Activated T-helper 2 cell treated with anti-CD3 and anti-CD28 coated beads, Interferon-gamma antibody, Interleukin-2, Interleukin-4, amounts not matched to agents 10 μg/mL and 5 μg/mL and 100 μg/mL, durations not matched to agents 14 hours and 24 hours and 36 hours (primary cell): ENCODE measurements at regions of chr17 and their contacts with region 1.

Region 1: GRCh38 chr17:39153599-39154051 is 2.2 kb upstream of the PLXDC1 start:
- DNase-seq: peak; percentile 84
- H3K4me3 Mint-ChIP-seq: peak overlapping the region; percentile 95
- H3K27ac Mint-ChIP-seq: peak overlapping the region; percentile 84
- H3K4me1 Mint-ChIP-seq: peaks cover 16% of the 10 kb centered on the region
- H3K27me3 Mint-ChIP-seq: peaks cover 26% of the 10 kb centered on the region

Region 2: GRCh38 chr17:38752119-38752929 is 401.3 kb before region 1 on chr17 and contains the start of gene PSMB3:
- intact Hi-C with region 1: loop called (anchors 5 kb)
- DNase-seq: peak; percentile 97
- H3K4me3 Mint-ChIP-seq: peak within 1 kb of the TSS; percentile 100
- H3K27ac Mint-ChIP-seq: peak within 1 kb of the TSS; percentile 99
- H3K4me1 Mint-ChIP-seq: peaks cover 31% of the 10 kb centered on the region
- H3K27me3 Mint-ChIP-seq: peaks cover 15% of the 10 kb centered on the region
- total RNA-seq, gene PSMB3: 337 and 342 TPM in 2 replicates

Region 3: GRCh38 chr17:38853292-38854219 is 300.1 kb before region 1 on chr17 and contains the start of gene RPL23:
- intact Hi-C with region 1: loop called (anchors 5 kb)
- DNase-seq: peak; percentile 90
- H3K4me3 Mint-ChIP-seq: peak within 1 kb of the TSS; percentile 98
- H3K27ac Mint-ChIP-seq: peak within 1 kb of the TSS; percentile 98
- H3K4me1 Mint-ChIP-seq: peaks cover 26% of the 10 kb centered on the region
- H3K27me3 Mint-ChIP-seq: no peaks in the 10 kb centered on the region
- total RNA-seq, gene RPL23: 1,775 and 1,796 TPM in 2 replicates

Region 4: DNA sequence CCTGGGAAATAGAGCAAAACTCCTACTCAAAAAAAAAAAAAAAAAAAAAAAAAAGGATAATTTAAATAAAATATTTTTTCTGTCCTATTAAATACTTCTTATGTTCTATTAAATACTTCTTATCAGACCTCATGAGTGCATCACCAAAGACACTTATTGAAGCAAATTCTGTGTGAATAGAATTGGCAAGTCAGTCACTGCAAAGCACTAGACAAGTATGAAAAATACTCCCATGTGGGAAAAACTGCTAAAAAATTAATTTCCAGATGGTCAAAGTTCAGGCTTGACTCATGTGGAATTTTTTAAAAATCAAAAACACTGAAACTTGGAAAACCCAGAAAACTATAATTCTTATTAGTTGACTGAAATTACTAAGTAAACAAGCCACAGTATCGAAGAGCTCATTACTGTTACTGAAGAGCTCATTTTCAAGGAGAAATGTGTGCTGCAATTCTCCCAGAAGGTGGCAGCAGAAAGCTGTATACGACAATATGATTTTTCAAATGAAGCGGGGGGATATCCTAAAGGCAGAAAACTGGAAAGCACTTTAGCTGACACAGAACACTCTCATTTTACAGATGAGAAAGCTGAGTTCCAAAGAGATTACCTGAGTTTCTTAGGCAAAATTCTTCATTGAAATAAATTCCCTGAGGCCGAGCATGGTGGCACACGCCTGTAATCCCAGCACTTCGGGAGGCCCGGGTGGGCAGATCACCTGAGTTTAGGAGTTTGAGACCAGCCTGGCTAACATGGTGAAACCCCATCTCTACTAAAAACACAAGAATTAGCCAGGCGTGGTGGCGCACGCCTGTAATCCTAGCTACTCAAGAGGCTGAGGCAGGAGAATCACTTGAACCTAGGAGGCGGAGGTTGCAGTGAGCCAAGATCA is 170.5 kb before region 1 on chr17:
- intact Hi-C with region 1: loop called (anchors 1 kb)
- DNase-seq: peak; percentile 19
- H3K4me3 Mint-ChIP-seq: no peak overlapping the region
- H3K27ac Mint-ChIP-seq: no peak overlapping the region
- H3K4me1 Mint-ChIP-seq: peaks cover 5% of the 10 kb centered on the region
- H3K27me3 Mint-ChIP-seq: peaks cover 13% of the 10 kb centered on the region

Region 5: DNA sequence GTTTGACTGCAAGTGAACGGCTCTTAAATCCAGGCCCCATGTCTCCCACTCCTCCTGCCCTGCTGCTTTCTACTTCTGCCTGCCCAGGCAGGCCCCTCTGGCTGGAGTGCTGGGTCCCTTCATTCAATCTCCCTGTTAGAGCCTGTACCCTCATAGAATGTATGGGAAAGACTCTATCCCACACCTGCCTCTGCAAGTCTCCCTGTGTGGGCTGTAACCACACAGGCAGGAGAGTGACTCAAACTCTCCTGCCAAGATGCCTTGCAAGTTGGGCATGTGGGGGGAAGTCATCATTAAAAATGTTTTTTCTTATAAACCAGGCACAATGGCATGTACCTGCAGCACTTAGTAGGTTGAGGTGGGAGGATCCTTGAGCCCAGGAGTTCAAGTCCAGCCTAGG is 79.7 kb before region 1 on chr17:
- intact Hi-C with region 1: loop called (anchors 5 kb)
- DNase-seq: no peak
- H3K4me3 Mint-ChIP-seq: no peak overlapping the region
- H3K27ac Mint-ChIP-seq: no peak overlapping the region
- H3K4me1 Mint-ChIP-seq: peaks cover 10% of the 10 kb centered on the region
- H3K27me3 Mint-ChIP-seq: peaks cover 2% of the 10 kb centered on the region

Region 6: GRCh38 chr17:39199820-39200069 is 46.1 kb after region 1 on chr17:
- intact Hi-C with region 1: loop called (anchors 5 kb)
- DNase-seq: peak; percentile 84
- H3K4me3 Mint-ChIP-seq: peak overlapping the region; percentile 96
- H3K27ac Mint-ChIP-seq: peak overlapping the region; percentile 98
- H3K4me1 Mint-ChIP-seq: peaks cover 42% of the 10 kb centered on the region
- H3K27me3 Mint-ChIP-seq: no peaks in the 10 kb centered on the region